Heart right ventricle (tissue), 16 donors: ENCODE measurements at regions of chr11 and their contacts with region 1.

Region 1: DNA sequence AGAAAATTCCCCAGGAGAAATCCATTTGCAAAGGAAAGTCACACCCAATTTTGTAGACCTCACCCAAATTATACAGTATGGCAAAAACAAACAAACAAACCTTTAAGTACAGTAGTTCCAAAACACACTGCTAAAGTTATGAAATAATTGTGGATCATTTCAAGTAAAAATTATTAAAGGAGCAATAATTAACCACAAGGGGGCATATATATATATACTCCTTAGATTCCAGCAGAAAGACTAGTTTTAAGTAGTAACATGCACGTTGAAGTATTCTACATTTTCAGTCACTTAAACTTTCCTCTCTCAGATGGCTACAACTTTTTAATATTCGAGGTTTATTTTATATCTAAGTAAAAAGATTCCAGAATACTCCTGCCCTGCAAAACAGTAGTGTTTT is 26.8 kb downstream of the RNF141 start:
- DNase-seq: no peak
- ATAC-seq: no peak
- H3K4me3 ChIP-seq: no peak overlapping the region
- H3K27ac ChIP-seq: no peak overlapping the region
- H3K4me1 ChIP-seq: peaks cover 0 to 12% (median 7%) of the 10 kb centered on the region in 9 donors
- H3K27me3 ChIP-seq: no peaks in the 10 kb centered on the region
- CTCF ChIP-seq: peak; percentile 13 to 56 (median 44)

Region 2: DNA sequence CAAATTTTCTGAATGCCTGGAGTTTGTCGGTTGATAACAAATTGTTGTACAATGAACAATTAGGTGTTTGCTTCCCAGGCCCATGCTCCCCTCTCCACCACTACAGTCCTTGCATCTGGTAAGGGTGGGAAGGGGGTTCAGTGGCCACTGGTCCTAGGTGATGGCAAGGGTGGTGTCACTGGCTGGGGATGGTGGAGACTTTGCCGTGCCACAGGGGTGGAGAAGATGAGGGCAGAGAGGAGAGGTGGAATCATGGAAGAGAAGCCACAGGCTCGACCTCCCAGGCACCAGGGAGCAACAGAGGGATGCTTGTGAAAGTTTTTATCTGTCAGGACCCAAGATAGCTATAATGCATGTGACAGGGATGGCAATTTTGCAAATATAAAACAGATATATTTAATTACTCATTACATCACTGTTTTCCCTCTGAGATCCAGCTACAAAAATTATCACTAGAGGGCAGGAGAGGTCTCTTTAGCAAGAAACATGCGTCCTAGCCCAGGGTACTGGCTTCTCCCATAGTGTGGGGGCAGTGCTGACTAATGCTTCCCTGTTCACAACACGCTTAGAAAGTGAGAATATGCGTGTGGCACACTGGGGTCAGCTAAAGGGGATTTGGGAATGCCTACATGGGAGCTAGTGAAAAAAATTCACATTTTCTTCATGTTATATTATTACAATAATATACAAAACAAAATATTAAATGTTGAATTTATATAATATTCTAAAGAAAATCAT is 108.2 kb before region 1 on chr11:
- intact Hi-C with region 1: loop called in 5 of 10 experiments (anchors 5 to 10 kb)
- DNase-seq: peak in 1 of 2 donors; percentile 79
- ATAC-seq: peak; percentile 85 to 94 (median 90)
- H3K4me3 ChIP-seq: no peak overlapping the region
- H3K27ac ChIP-seq: no peak overlapping the region
- H3K4me1 ChIP-seq: peaks cover 0 to 34% (median 13%) of the 10 kb centered on the region in 9 donors
- H3K27me3 ChIP-seq: no peaks in the 10 kb centered on the region
- CTCF ChIP-seq: peak; percentile 52 to 84 (median 78)

Region 3: GRCh38 chr11:10460611-10461275 is 53.5 kb before region 1 on chr11:
- intact Hi-C with region 1: no loop called
- DNase-seq: no peak
- ATAC-seq: no peak
- H3K4me3 ChIP-seq: no peak overlapping the region
- H3K27ac ChIP-seq: peak overlapping the region in 1 of 10 donors; percentile 33
- H3K4me1 ChIP-seq: peaks cover 0 to 49% (median 5%) of the 10 kb centered on the region in 9 donors
- H3K27me3 ChIP-seq: peaks cover 0 to 5% (median 0%) of the 10 kb centered on the region in 7 donors
- CTCF ChIP-seq: no peak

Region 4: DNA sequence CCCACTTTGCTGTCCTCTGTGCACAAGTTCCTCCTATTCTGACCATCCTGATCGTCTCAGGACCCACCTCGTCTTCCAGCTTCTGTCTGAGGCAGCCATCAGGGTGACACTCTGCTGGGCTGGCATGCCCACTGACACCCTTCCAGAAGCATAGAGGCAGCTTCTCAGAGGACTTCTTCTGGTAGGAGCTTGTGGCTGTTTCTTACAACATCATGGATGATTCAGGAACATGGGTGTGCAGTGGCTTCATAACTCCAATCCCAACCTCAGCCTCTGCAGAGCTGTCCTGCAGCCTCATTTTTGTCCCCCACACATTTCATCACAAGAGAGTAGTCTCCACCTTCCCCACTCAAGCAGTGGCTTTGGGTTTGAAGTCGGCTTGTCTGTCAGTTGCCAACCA is 215.9 kb after region 1 on chr11:
- intact Hi-C with region 1: loop called in 9 of 10 experiments (anchors 1 to 5 kb)
- DNase-seq: no peak
- ATAC-seq: no peak
- H3K4me3 ChIP-seq: no peak overlapping the region
- H3K27ac ChIP-seq: no peak overlapping the region
- H3K4me1 ChIP-seq: peaks cover 0 to 16% (median 0%) of the 10 kb centered on the region in 9 donors
- H3K27me3 ChIP-seq: peaks cover 0 to 19% (median 0%) of the 10 kb centered on the region in 7 donors
- CTCF ChIP-seq: no peak